ENCODE measurements at regions of chr20 and their contacts with region 1.

Region 1: GRCh38 chr20:9672981-9673380 is 158.6 kb downstream of the LAMP5 start:
- DNase-seq: no peak
- H3K4me3 ChIP-seq: no peak overlapping the region
- H3K4me3 Mint-ChIP-seq: no peak overlapping the region
- H3K27ac Mint-ChIP-seq: no peak overlapping the region
- H3K4me1 ChIP-seq: no peaks in the 10 kb centered on the region
- H3K4me1 Mint-ChIP-seq: no peaks in the 10 kb centered on the region
- H3K27me3 ChIP-seq: no peaks in the 10 kb centered on the region
- H3K27me3 Mint-ChIP-seq: no peaks in the 10 kb centered on the region
- CTCF ChIP-seq: no peak

Region 2: DNA sequence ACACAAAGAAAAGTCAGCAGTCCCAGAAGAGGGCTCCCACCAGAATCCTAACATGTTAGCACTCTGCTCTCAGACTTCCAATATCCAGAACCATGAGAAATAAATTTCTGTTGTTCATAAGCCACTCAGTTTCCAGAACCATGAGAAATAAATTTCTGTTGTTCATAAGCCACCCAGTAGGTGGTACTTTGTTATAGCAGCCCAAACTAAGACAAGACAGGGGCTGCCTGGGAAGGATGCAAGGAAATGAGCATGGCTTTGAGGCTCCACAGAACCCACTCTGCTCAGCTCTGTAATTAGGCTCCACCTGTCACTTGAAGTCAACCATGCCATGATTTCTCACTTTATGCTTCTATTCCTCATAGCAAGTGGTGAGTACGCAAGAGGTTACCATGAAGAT is 696.7 kb before region 1 on chr20:
- CTCF ChIA-PET with region 1: no interaction called
- POLR2A ChIA-PET with region 1: interaction called, 11 read pairs
- intact Hi-C with region 1: no loop called
- DNase-seq: no peak
- H3K4me3 ChIP-seq: no peak overlapping the region
- H3K4me3 Mint-ChIP-seq: no peak overlapping the region
- H3K27ac Mint-ChIP-seq: no peak overlapping the region
- H3K4me1 ChIP-seq: no peaks in the 10 kb centered on the region
- H3K4me1 Mint-ChIP-seq: no peaks in the 10 kb centered on the region
- H3K27me3 ChIP-seq: no peaks in the 10 kb centered on the region
- H3K27me3 Mint-ChIP-seq: peaks cover 7% of the 10 kb centered on the region
- CTCF ChIP-seq: no peak